ENCODE measurements at regions of chr9 and their contacts with region 1.

Region 1: GRCh38 chr9:111937781-111938426 is 41.3 kb downstream of the UGCG start:
- DNase-seq: peak in 9 of 10 donors; percentile 20 to 72 (median 40)
- ATAC-seq: peak; percentile 96 to 99
- H3K4me3 Mint-ChIP-seq: peak overlapping the region; percentile 58 to 80 (median 74)
- H3K27ac Mint-ChIP-seq: peak overlapping the region; percentile 49 to 87 (median 78)
- H3K4me1 Mint-ChIP-seq: peaks cover 22 to 33% (median 30%) of the 10 kb centered on the region in 4 donors
- H3K27me3 Mint-ChIP-seq: no peaks in the 10 kb centered on the region

Region 2: DNA sequence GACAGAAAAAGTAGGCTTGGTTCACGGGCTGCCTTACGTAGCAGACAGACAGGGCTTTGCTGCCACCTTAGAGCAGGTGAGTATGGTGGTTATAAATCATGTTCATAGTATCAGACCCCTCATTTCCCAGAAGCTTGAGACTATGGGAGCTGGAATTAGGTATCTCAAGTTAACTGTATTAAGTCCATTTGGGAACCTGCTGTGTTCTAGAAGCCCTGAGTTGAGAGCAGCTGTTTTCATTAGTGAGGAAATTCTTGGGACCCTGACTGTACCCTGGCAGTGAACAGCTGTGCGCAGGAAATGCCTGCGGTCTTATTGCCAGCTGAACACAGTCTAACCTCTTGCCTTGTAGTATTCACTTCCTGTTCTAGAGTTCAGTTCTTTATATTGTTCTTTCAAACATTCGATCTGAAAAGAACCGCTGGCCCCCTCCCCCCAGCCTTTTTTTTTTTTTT is 11.5 kb before region 1 on chr9:
- POLR2A ChIA-PET with region 1: interaction called, 12 read pairs
- DNase-seq: peak; percentile 22 to 84 (median 68)
- ATAC-seq: peak; percentile 98 to 99
- H3K4me3 Mint-ChIP-seq: peak overlapping the region; percentile 60 to 84 (median 72)
- H3K27ac Mint-ChIP-seq: peak overlapping the region; percentile 80 to 94 (median 86)
- H3K4me1 Mint-ChIP-seq: peaks cover 8 to 53% (median 35%) of the 10 kb centered on the region in 4 donors
- H3K27me3 Mint-ChIP-seq: no peaks in the 10 kb centered on the region